ENCODE measurements at regions of chr2 and their contacts with region 1.

Region 1: DNA sequence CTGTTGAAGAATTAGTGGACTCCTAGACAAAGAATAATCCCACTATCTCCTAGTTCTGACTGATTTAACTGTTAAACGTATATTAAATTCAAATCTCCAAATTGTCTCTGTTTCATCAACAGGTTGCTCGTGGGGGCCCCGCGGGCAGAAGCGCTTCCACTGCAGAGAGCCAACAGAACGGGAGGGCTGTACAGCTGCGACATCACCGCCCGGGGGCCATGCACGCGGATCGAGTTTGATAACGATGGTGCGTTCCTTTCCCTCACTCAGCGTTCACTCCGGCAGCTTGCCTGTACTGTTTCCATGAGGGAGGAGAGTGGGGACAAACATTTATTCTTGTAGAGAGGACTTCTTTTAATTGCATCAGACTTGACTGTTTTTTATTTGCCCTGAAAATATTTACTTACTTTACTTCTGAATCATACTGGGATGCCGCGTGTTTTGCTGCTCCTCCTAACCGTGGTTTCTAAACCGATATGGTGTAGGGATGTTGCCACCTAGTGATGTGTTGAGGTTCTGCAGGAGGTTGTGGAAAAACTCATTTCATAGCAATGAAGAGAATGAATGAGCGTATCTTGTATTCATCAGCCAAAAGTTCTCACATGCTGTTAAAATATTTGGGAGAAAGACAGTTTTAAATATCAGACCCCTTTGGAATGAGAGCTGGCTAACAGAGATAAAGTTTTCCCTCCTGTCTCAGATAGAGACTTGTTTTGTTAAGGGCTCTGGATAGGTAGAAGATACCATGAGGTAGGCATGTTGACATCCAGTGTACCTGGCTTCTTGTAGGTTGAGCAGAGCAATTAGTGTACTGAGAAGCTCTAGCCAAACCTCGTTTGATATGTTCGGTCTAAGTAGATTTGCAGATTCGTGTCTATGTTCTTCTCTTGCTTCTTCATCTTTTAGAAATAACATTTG is 38.3 kb downstream of the ITGA6 start:
- DNase-seq: peak; percentile 61
- H3K4me3 Mint-ChIP-seq: peak overlapping the region; percentile 15
- H3K27ac Mint-ChIP-seq: no peak overlapping the region
- H3K4me1 Mint-ChIP-seq: peaks cover 54% of the 10 kb centered on the region
- H3K27me3 Mint-ChIP-seq: no peaks in the 10 kb centered on the region

Region 2: GRCh38 chr2:171574149-171574795 is 891.4 kb before region 1 on chr2:
- intact Hi-C with region 1: loop called (anchors 1 kb)
- DNase-seq: peak; percentile 73
- H3K4me3 Mint-ChIP-seq: no peak overlapping the region
- H3K27ac Mint-ChIP-seq: no peak overlapping the region
- H3K4me1 Mint-ChIP-seq: no peaks in the 10 kb centered on the region
- H3K27me3 Mint-ChIP-seq: peaks cover 9% of the 10 kb centered on the region

Region 3: DNA sequence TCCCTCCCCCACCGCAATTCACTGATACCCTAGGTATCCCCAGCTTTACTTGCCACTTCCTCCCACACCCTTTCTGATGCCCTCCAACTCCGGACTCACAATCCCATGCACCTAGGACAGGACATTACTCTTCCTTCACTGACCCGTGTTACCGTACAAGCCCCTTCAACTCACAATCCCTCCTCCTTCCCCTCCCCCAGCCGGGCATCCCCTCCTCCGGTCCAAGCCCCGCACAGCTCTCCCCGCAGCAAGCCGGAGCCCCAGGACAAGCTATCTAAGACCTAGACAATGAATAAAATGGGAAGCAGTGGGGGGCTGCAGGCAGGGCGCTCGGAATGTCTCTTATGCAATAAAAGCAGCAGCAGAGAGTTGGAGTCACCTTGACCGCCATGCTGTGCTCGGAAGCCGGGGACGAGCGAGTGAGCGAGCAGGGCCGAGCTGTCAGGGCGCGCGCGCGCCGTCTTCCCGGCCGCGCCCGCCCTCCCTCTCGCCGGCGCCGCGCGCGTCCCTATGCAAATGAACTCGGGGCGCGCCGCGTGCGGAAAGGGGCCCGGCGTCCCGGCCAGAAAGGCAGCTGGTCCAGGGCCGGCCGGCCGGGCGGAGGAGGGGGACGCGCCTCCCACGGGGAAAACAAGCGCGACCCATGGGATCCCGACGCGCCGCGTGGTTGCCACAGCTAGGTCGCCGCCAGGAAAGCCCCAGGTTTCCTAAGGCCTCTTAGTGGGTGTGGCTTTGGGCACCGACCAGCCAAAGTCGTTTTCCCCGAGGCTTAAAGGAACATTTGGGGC is 571.7 kb before region 1 on chr2 and contains the start of gene SLC25A12:
- intact Hi-C with region 1: loop called (anchors 5 kb)
- DNase-seq: peak; percentile 71
- H3K4me3 Mint-ChIP-seq: peak within 1 kb of the TSS; percentile 98
- H3K27ac Mint-ChIP-seq: peak within 1 kb of the TSS; percentile 90
- H3K4me1 Mint-ChIP-seq: peaks cover 57% of the 10 kb centered on the region
- H3K27me3 Mint-ChIP-seq: peaks cover 7% of the 10 kb centered on the region
- total RNA-seq, gene SLC25A12: 34.6 and 35.0 TPM in 2 replicates

Region 4: GRCh38 chr2:172172513-172173173 is 293.0 kb before region 1 on chr2:
- intact Hi-C with region 1: loop called (anchors 1 kb)
- DNase-seq: peak; percentile 50
- H3K4me3 Mint-ChIP-seq: peak overlapping the region; percentile 70
- H3K27ac Mint-ChIP-seq: no peak overlapping the region
- H3K4me1 Mint-ChIP-seq: no peaks in the 10 kb centered on the region
- H3K27me3 Mint-ChIP-seq: peaks cover 18% of the 10 kb centered on the region

Region 5: DNA sequence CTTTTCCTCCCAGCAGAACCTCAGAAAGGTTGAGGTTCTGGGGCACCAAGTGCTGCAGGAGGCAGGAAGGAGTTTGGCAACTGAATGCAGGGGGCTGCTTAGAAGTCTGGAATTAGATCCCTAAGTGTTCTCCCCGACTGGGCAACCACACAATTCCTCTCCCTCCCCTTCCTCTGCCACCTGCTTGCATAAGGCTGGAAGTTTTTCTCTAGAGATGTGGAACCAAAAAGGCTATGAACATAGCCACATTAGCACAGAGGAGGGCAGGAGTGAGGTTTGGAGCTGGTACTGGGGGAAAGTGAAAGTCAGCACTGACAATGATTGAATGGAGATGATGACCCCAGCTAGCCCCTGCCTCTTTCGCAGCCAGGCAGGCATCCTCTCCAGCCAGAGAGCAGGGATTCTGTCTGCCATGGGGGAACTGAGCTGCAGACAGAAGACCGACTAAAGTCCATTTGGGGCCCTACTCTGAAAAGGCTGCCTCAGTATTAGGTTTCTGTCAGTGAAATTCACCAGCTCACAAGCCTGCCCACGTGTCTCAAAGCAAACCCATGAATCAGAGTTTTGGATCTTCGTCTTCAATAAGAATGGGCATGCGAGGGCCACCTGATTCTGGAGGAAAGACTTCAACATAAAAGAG is 126.2 kb before region 1 on chr2:
- intact Hi-C with region 1: loop called (anchors 5 kb)
- DNase-seq: no peak
- H3K4me3 Mint-ChIP-seq: peak overlapping the region; percentile 31
- H3K27ac Mint-ChIP-seq: no peak overlapping the region
- H3K4me1 Mint-ChIP-seq: peaks cover 25% of the 10 kb centered on the region
- H3K27me3 Mint-ChIP-seq: peaks cover 2% of the 10 kb centered on the region

Region 6: DNA sequence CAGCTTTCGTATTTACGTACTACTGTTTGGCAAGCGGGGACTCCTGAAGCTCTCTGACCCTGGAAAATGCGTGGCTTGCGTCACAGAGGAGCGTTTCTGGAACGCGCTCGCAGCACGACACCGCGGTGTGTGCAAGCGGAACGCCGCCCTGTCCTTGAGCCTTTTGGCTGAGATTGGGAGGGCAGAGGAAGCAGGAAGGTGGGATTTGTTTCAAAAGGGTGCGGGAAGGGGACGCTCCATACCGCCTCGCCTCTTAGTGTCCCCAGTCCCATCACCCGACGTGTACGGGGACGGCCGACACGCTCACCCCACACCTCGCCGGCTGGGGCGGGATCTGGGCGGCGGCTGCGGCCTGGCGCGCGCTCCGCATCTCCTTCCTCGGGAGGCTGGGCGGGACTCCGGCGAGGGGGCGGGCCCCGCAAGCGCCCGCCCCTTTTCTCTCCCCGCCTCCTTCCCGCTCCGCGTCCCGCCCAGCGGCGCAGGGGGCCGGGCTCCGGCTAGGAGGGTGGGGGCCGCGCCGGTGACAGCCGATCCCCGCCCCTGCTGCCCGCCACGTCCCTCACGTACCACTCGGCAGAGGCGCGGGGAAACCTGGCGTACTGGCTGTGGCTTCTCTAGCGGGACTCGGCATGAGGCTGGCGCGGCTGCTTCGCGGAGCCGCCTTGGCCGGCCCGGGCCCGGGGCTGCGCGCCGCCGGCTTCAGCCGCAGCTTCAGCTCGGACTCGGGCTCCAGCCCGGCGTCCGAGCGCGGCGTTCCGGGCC is 90.0 kb after region 1 on chr2 and contains the start of gene PDK1:
- intact Hi-C with region 1: loop called (anchors 2 kb)
- DNase-seq: peak; percentile 91
- H3K4me3 Mint-ChIP-seq: peak within 1 kb of the TSS; percentile 97
- H3K27ac Mint-ChIP-seq: peak within 1 kb of the TSS; percentile 98
- H3K4me1 Mint-ChIP-seq: peaks cover 65% of the 10 kb centered on the region
- H3K27me3 Mint-ChIP-seq: no peaks in the 10 kb centered on the region
- total RNA-seq, gene PDK1: 27.6 and 35.8 TPM in 2 replicates